Activated CD4-positive, alpha-beta memory T cell treated with anti-CD3 and anti-CD28 coated beads for 36 hours (primary cell): ENCODE measurements at regions of chr11 and their contacts with region 1.

Region 1: DNA sequence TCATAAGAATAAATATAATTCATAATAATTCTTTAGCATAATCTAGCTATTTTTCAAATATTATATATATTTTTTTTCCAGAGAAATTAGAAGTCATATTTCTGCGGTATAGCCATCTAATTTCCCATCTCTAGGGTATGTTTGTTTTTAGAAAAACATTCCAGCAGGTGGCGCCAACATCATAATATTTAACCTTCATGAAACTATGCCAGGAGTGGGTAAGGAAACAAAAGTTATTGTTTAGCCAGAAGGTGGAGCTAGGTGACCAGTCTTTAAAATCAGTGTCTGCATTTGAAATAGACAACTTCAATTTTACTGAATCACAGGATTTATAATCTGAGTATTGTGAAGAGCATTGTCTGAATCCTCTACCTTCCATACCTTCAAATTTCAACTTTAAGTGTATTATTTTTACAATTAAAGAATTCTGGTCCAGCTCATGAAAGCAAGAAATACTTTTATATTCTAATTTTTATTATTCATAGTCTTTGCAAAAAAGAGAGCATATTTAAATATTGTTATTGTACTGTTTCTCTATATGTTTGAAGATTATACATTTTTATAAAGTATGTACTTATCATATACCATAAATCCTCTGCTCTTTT is 15.7 kb upstream of the CCDC179 start:
- DNase-seq: peak; percentile 58
- H3K4me3 Mint-ChIP-seq: no peak overlapping the region
- H3K27ac Mint-ChIP-seq: no peak overlapping the region
- H3K4me1 Mint-ChIP-seq: no peaks in the 10 kb centered on the region
- H3K27me3 Mint-ChIP-seq: no peaks in the 10 kb centered on the region

Region 2: GRCh38 chr11:23112987-23113886 is 237.3 kb after region 1 on chr11:
- CTCF ChIA-PET with region 1: no interaction called
- POLR2A ChIA-PET with region 1: no interaction called
- intact Hi-C with region 1: loop called (anchors 10 kb)
- DNase-seq: no peak
- H3K4me3 Mint-ChIP-seq: no peak overlapping the region
- H3K27ac Mint-ChIP-seq: no peak overlapping the region
- H3K4me1 Mint-ChIP-seq: no peaks in the 10 kb centered on the region
- H3K27me3 Mint-ChIP-seq: no peaks in the 10 kb centered on the region

Region 3: GRCh38 chr11:23540101-23540561 is 664.2 kb after region 1 on chr11:
- CTCF ChIA-PET with region 1: no interaction called
- POLR2A ChIA-PET with region 1: no interaction called
- intact Hi-C with region 1: loop called (anchors 10 kb)
- DNase-seq: no peak
- H3K4me3 Mint-ChIP-seq: no peak overlapping the region
- H3K27ac Mint-ChIP-seq: no peak overlapping the region
- H3K4me1 Mint-ChIP-seq: no peaks in the 10 kb centered on the region
- H3K27me3 Mint-ChIP-seq: no peaks in the 10 kb centered on the region